CD4-positive, alpha-beta memory T cell (primary cell): ENCODE measurements at regions of chr15 and their contacts with region 1.

Region 1: DNA sequence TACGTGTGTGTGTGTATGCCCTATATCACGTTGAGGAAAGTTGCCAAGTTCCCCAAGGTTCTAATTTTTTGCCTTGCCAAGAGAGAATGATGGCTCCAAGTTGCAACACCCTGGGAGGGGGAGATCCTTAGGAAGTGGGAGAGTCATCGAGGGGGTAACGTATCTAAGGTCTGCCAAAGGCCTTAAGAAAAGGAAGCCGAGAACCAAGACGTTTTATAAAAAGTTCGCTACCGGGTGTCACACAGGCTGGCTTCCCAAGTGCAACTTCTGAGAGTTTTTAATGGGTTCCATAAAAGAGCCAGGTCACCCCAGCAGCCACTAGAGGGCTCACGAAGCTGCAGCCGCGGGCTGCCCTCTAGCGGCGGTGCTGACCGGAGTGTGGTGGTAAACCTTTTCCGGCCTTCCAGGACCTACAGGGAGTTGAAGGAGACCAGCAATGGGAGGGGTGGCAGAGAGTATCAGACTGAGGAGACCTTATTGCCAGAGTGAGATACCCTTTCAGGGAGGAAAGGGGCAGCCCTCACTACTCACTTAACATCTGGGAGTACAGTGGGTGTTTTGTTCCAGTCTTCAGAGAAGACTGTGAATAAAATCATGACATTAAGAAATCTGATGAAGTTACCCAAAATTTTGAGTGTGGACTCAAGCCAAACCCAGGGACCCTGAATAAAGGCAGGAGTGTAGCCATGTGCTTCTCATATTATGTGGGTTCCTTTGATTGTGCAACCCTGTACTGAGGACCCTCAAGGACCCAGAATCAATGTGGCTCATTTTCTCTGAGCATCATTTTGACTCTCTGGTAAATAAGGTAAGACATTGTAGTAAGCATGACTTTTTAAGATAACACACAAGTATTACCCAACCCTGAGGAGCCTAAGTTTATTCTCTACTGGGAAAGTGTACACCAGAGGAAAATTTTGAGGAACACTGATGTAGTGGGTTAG is 2.5 kb upstream of the RFX7 start:
- DNase-seq: peak; percentile 82 to 85 (median 84)
- H3K4me3 ChIP-seq: peak overlapping the region; percentile 19 to 81
- H3K4me3 Mint-ChIP-seq: peak overlapping the region; percentile 84 to 97 (median 90)
- H3K27ac ChIP-seq: peak overlapping the region; percentile 53
- H3K27ac Mint-ChIP-seq: peak overlapping the region; percentile 88 to 97 (median 92)
- H3K4me1 ChIP-seq: peaks cover 35% of the 10 kb centered on the region
- H3K4me1 Mint-ChIP-seq: peaks cover 22 to 39% (median 31%) of the 10 kb centered on the region in 4 donors
- H3K27me3 ChIP-seq: no peaks in the 10 kb centered on the region
- H3K27me3 Mint-ChIP-seq: peaks cover 0 to 2% of the 10 kb centered on the region in 2 donors

Region 2: GRCh38 chr15:55407949-55408791 is 838.0 kb before region 1 on chr15 and contains the starts of genes CCPG1 and PIERCE2:
- CTCF ChIA-PET with region 1: no interaction called
- POLR2A ChIA-PET with region 1: interaction called, 5 read pairs
- intact Hi-C with region 1: loop called (anchors 2 kb)
- DNase-seq: peak; percentile 87 to 91 (median 90)
- H3K4me3 ChIP-seq: peak within 1 kb of the TSS; percentile 45 to 91
- H3K4me3 Mint-ChIP-seq: peak within 1 kb of the TSS; percentile 91 to 96 (median 95)
- H3K27ac ChIP-seq: peak within 1 kb of the TSS; percentile 70
- H3K27ac Mint-ChIP-seq: peak within 1 kb of the TSS; percentile 86 to 96 (median 94)
- H3K4me1 ChIP-seq: peaks cover 31% of the 10 kb centered on the region
- H3K4me1 Mint-ChIP-seq: peaks cover 18 to 39% (median 27%) of the 10 kb centered on the region in 4 donors
- H3K27me3 ChIP-seq: no peaks in the 10 kb centered on the region
- H3K27me3 Mint-ChIP-seq: no peaks in the 10 kb centered on the region
- total RNA-seq, gene CCPG1: 35.4 to 38.2 TPM
- total RNA-seq, gene PIERCE2: not detected

Region 3: GRCh38 chr15:55993111-55993803 is 252.9 kb before region 1 on chr15 and contains the start of gene NEDD4:
- CTCF ChIA-PET with region 1: interaction called, 7 read pairs
- POLR2A ChIA-PET with region 1: interaction called, 3 read pairs
- intact Hi-C with region 1: loop called (anchors 2 kb)
- DNase-seq: peak; percentile 64 to 82 (median 74)
- H3K4me3 ChIP-seq: peak within 1 kb of the TSS; percentile 36 to 61
- H3K4me3 Mint-ChIP-seq: peak within 1 kb of the TSS; percentile 89 to 94 (median 92)
- H3K27ac ChIP-seq: no peak within 1 kb of the TSS
- H3K27ac Mint-ChIP-seq: peak within 1 kb of the TSS; percentile 17 to 85 (median 61)
- H3K4me1 ChIP-seq: peaks cover 15% of the 10 kb centered on the region
- H3K4me1 Mint-ChIP-seq: peaks cover 10 to 27% (median 17%) of the 10 kb centered on the region in 4 donors
- H3K27me3 ChIP-seq: no peaks in the 10 kb centered on the region
- H3K27me3 Mint-ChIP-seq: no peaks in the 10 kb centered on the region
- total RNA-seq, gene NEDD4: 4.2 to 5.8 TPM

Region 4: GRCh38 chr15:56102441-56102840 is 143.7 kb before region 1 on chr15:
- CTCF ChIA-PET with region 1: no interaction called
- POLR2A ChIA-PET with region 1: no interaction called
- intact Hi-C with region 1: loop called (anchors 10 kb)
- DNase-seq: no peak
- H3K4me3 ChIP-seq: no peak overlapping the region
- H3K4me3 Mint-ChIP-seq: no peak overlapping the region
- H3K27ac ChIP-seq: no peak overlapping the region
- H3K27ac Mint-ChIP-seq: no peak overlapping the region
- H3K4me1 ChIP-seq: no peaks in the 10 kb centered on the region
- H3K4me1 Mint-ChIP-seq: peaks cover 0 to 5% (median 0%) of the 10 kb centered on the region in 4 donors
- H3K27me3 ChIP-seq: no peaks in the 10 kb centered on the region
- H3K27me3 Mint-ChIP-seq: no peaks in the 10 kb centered on the region

Region 5: DNA sequence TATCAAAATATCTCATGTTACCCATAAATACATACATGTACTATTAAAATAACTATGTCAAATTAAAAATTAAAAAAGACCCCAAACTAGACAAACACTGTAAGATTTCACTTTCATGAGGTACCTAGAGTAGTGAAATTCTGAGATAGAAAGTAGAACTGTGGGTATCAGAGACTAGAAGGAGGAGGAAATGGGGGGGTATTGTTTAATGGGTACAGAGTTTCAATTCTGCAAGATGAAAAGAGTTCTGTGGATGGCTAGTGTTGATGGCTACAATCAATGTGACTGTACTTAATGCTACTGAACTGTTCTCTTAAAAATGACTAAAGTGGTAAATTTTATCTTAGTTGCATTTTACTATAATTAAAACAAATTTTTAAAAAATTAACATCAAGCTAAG is 39.1 kb before region 1 on chr15:
- CTCF ChIA-PET with region 1: interaction called, 6 read pairs
- POLR2A ChIA-PET with region 1: interaction called, 16 read pairs
- intact Hi-C with region 1: loop called (anchors 2 kb)
- DNase-seq: peak in 1 of 5 donors; percentile 11
- H3K4me3 ChIP-seq: no peak overlapping the region
- H3K4me3 Mint-ChIP-seq: peak overlapping the region in 5 of 8 donors; percentile 3 to 74 (median 27)
- H3K27ac ChIP-seq: no peak overlapping the region
- H3K27ac Mint-ChIP-seq: peak overlapping the region; percentile 6 to 88 (median 59)
- H3K4me1 ChIP-seq: peaks cover 61% of the 10 kb centered on the region
- H3K4me1 Mint-ChIP-seq: peaks cover 64 to 88% (median 76%) of the 10 kb centered on the region in 4 donors
- H3K27me3 ChIP-seq: no peaks in the 10 kb centered on the region
- H3K27me3 Mint-ChIP-seq: no peaks in the 10 kb centered on the region

Region 6: DNA sequence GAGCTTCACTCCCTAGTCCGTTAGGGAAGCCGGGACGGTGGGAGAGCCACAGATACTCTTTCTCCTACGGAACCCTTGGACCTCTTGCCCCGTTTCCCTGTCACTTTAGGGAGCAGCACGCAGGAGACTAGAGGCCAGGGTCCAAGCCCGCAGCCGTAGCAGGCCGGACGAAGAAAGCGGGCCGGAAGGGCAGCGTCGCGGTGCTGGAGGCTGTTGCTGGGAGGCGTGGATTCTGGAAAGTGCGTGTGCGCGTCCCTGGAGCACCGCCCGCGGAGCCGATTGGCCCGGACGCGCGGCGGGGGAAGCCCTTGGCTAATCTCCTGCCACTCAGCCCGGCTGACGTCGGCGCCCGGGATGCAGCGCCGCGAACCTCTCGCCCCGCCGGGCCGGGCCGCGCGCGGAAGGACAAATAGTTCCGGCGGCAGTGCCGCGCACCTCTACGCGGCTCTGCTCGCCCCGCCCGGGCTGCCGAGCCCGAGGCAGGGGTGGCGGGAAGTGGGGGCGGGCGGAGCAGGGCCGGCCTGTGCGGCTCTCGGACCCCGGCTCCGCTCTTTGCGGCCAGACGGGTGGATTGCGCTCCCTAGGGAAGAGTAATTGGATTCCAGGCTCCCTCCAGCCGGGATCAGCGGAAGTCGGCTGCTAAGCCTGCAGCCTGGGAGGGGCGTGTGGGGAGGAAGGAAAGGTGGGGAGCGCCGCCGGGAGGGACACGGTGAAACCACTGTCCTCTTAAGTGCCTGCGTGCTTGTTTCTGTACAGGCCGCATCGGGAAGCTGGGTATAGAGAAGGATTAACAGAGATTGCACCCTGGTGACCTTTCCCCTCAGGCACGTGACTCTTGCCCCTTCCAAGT is 641.0 kb after region 1 on chr15:
- CTCF ChIA-PET with region 1: no interaction called
- POLR2A ChIA-PET with region 1: no interaction called
- intact Hi-C with region 1: loop called (anchors 5 kb)
- DNase-seq: peak; percentile 81 to 85 (median 83)
- H3K4me3 ChIP-seq: peak overlapping the region; percentile 33 to 59
- H3K4me3 Mint-ChIP-seq: peak overlapping the region; percentile 88 to 93 (median 90)
- H3K27ac ChIP-seq: peak overlapping the region; percentile 83
- H3K27ac Mint-ChIP-seq: peak overlapping the region; percentile 92 to 98 (median 95)
- H3K4me1 ChIP-seq: peaks cover 19% of the 10 kb centered on the region
- H3K4me1 Mint-ChIP-seq: peaks cover 21 to 30% (median 27%) of the 10 kb centered on the region in 4 donors
- H3K27me3 ChIP-seq: no peaks in the 10 kb centered on the region
- H3K27me3 Mint-ChIP-seq: no peaks in the 10 kb centered on the region

Region 7: DNA sequence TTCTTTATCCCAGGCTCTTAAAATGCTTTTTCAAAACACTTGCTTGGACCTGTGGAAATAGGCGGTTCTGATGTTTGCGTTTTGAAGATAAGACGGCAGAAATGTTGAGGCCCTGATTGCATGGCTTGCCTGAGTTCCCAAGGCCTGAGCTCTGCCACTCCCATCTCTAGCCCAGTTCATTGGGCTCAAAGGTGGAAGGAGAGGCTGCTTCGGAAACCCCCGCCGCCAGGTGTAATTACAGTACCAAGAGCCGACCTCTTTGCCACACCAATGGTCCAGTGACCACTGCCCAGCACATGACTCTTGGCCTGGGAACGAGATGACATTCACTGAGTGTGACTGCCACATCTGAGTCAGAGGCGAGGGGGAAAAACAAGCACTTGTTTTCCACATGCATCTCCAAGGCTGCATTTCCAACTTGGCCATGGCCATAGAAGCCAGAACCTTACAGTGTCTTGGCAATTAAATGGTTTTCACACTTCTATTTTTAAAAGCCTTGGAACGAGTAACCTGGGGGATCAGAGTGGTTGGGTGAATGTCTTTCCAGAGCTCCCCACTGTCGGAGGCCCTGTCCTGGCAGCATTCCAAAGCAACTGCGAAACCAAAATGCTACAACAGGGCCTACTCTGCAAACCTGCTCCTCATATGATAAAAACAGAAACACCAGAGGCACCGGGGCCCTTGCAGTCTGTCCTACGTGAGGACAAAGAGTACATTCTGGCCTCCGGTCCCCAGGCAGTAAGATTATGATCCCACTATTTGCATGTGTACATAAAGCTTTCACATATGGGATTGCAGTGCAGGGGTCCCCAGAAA is 1066.4 kb after region 1 on chr15:
- CTCF ChIA-PET with region 1: no interaction called
- POLR2A ChIA-PET with region 1: no interaction called
- intact Hi-C with region 1: no loop called
- DNase-seq: no peak
- H3K4me3 ChIP-seq: no peak overlapping the region
- H3K4me3 Mint-ChIP-seq: no peak overlapping the region
- H3K27ac ChIP-seq: no peak overlapping the region
- H3K27ac Mint-ChIP-seq: no peak overlapping the region
- H3K4me1 ChIP-seq: no peaks in the 10 kb centered on the region
- H3K4me1 Mint-ChIP-seq: no peaks in the 10 kb centered on the region
- H3K27me3 ChIP-seq: no peaks in the 10 kb centered on the region
- H3K27me3 Mint-ChIP-seq: peaks cover 2 to 6% of the 10 kb centered on the region in 2 donors